ENCODE measurements at regions of chr12 and their contacts with region 1.

Region 1: GRCh38 chr12:4506870-4507269 is 31.8 kb upstream of the RAD51AP1 start:
- DNase-seq: no peak
- H3K4me3 Mint-ChIP-seq: peak overlapping the region; percentile 2
- H3K27ac Mint-ChIP-seq: peak overlapping the region; percentile 58
- H3K4me1 Mint-ChIP-seq: peaks cover 24% of the 10 kb centered on the region
- H3K27me3 Mint-ChIP-seq: no peaks in the 10 kb centered on the region

Region 2: DNA sequence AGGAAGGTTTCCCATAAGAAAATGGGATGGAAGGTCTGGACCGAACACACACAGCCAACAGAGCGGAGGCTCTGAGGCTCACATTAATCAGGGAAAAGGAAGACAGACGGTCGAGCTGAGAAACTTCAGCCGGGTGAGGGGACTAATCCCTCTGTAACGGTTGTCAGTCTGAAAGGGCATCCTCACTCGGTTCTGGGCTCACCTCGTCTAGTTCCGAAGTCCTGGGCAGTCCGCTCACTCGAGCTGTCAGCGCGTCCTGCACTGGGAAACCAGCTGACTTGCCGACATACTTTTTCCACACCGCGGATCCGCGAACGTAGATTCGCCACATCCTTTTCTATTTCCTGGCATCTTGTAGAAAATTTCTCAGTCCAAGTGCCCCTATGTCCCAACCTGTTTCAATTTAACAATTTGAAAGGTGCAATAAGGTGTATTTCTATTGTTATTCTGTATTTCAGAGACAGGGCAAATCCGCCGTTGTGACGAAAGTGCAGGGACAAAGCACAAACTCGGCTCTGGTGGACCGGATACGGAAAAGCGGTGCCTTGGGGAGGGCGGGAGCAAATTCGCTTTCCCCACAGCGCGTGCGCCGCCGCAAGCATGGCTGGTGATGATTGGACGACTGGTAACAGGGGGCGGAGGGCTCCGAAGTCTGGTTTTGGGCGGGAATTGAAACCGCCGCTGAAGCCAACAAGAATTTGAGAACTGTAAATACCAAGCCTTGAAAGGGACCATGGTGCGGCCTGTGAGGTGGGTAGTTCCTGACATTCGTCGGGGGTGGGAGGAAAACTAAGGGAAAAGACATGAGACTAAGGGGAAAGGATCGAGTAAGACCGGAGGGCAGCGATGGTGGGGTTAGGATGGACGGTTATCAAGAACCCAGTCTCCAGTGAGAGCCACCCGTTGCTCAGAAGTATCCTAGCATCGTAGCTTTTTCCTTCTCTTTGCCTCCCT is 31.6 kb after region 1 on chr12 and contains the start of gene RAD51AP1:
- CTCF ChIA-PET with region 1: no interaction called
- POLR2A ChIA-PET with region 1: interaction called, 11 read pairs
- DNase-seq: peak; percentile 96
- H3K4me3 Mint-ChIP-seq: peak within 1 kb of the TSS; percentile 99
- H3K27ac Mint-ChIP-seq: peak within 1 kb of the TSS; percentile 92
- H3K4me1 Mint-ChIP-seq: peaks cover 46% of the 10 kb centered on the region
- H3K27me3 Mint-ChIP-seq: no peaks in the 10 kb centered on the region
- total RNA-seq, gene RAD51AP1: 43.5 to 45.6 TPM